B cell (primary cell): ENCODE measurements at regions of chr10 and their contacts with region 1.

Region 1: DNA sequence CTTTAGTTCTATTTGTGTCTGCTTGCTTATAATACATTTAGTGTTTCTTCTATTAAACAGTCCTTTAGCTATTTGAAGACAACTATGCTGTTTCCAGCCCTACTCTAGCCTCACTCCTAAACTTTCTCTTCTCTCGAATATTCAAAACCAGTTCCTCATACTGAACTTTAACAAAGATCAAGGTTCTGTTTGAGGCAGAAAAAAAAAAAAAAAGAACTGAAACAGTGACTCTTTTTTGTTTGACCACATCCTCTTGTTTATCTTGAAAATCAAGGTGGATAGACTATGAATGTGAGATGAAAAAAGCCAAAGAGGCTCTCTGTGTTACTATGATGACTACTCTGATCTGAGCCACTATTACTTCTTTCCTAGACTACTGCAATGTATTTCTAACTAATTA is 154.3 kb downstream of the ZNF365 start:
- DNase-seq: peak; percentile 77
- ATAC-seq: peak; percentile 64
- H3K4me3 ChIP-seq: peak overlapping the region in 1 of 5 experiments; percentile 38
- H3K4me3 Mint-ChIP-seq: peak overlapping the region; percentile 66
- H3K27ac ChIP-seq: peak overlapping the region; percentile 84 to 90
- H3K27ac Mint-ChIP-seq: peak overlapping the region; percentile 96
- H3K4me1 ChIP-seq: peaks cover 47 to 51% of the 10 kb centered on the region in 2 donors
- H3K4me1 Mint-ChIP-seq: peaks cover 62% of the 10 kb centered on the region
- H3K27me3 ChIP-seq: no peaks in the 10 kb centered on the region
- H3K27me3 Mint-ChIP-seq: no peaks in the 10 kb centered on the region
- CTCF ChIP-seq: no peak

Region 2: DNA sequence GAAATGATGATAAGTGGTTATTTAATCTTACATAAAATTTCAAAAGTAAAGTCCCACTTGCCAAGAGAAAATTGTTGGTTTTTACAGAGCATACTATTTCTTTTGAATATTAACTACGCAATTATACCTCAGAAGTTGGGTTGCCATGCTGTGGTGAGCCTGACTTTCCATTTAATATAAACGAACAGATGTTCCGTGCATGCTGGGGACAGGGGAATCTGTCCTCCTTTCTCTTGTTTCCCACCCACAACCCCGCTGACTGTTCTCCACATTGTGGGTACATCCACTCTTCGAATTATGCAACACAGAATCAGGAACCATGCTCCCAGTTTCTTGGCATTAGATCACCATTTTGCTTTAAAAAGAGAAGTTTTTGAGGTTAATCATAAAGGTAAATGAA is 230.6 kb before region 1 on chr10:
- CTCF ChIA-PET with region 1: no interaction called
- POLR2A ChIA-PET with region 1: no interaction called
- intact Hi-C with region 1: no loop called
- DNase-seq: no peak
- ATAC-seq: no peak
- H3K4me3 ChIP-seq: no peak overlapping the region
- H3K4me3 Mint-ChIP-seq: no peak overlapping the region
- H3K27ac ChIP-seq: no peak overlapping the region
- H3K27ac Mint-ChIP-seq: no peak overlapping the region
- H3K4me1 ChIP-seq: no peaks in the 10 kb centered on the region
- H3K4me1 Mint-ChIP-seq: no peaks in the 10 kb centered on the region
- H3K27me3 ChIP-seq: peaks cover 0 to 3% (median 3%) of the 10 kb centered on the region in 4 experiments
- H3K27me3 Mint-ChIP-seq: peaks cover 31% of the 10 kb centered on the region
- CTCF ChIP-seq: no peak

Region 3: DNA sequence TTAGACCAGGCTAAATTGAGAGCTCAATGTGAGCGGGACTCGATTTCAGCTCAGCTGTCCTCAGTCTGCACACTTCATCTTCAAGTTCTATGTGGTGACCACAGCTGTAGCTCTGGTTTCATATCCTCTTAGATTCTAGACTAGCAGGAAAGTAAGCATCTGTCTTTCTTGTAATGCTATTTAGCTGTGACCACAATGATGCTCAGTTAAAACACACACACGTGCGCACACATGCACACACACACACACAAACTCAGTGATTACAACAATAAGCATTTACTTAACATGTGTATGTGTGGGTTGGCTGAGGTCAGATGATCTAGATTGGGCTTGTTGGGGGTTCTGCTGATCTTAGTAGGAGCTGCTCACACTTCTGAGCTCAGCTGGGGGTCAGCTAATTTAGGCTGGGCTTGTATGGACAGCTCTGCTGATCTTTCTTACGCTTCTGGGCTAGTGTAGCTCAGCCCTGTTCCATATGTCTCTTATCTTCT is 71.8 kb before region 1 on chr10:
- CTCF ChIA-PET with region 1: interaction called, 7 read pairs
- POLR2A ChIA-PET with region 1: interaction called, 8 read pairs
- intact Hi-C with region 1: loop called (anchors 2 kb)
- DNase-seq: peak; percentile 85
- ATAC-seq: peak; percentile 93
- H3K4me3 ChIP-seq: no peak overlapping the region
- H3K4me3 Mint-ChIP-seq: peak overlapping the region; percentile 63
- H3K27ac ChIP-seq: peak overlapping the region in 1 of 2 donors; percentile 1
- H3K27ac Mint-ChIP-seq: peak overlapping the region; percentile 86
- H3K4me1 ChIP-seq: peaks cover 30 to 33% of the 10 kb centered on the region in 2 donors
- H3K4me1 Mint-ChIP-seq: peaks cover 34% of the 10 kb centered on the region
- H3K27me3 ChIP-seq: no peaks in the 10 kb centered on the region
- H3K27me3 Mint-ChIP-seq: no peaks in the 10 kb centered on the region
- CTCF ChIP-seq: no peak

Region 4: GRCh38 chr10:62512732-62513475 is 15.5 kb before region 1 on chr10:
- CTCF ChIA-PET with region 1: no interaction called
- POLR2A ChIA-PET with region 1: no interaction called
- intact Hi-C with region 1: no loop called
- DNase-seq: no peak
- ATAC-seq: no peak
- H3K4me3 ChIP-seq: no peak overlapping the region
- H3K4me3 Mint-ChIP-seq: no peak overlapping the region
- H3K27ac ChIP-seq: no peak overlapping the region
- H3K27ac Mint-ChIP-seq: no peak overlapping the region
- H3K4me1 ChIP-seq: no peaks in the 10 kb centered on the region
- H3K4me1 Mint-ChIP-seq: peaks cover 9% of the 10 kb centered on the region
- H3K27me3 ChIP-seq: no peaks in the 10 kb centered on the region
- H3K27me3 Mint-ChIP-seq: peaks cover 3% of the 10 kb centered on the region
- CTCF ChIP-seq: no peak

Region 5: DNA sequence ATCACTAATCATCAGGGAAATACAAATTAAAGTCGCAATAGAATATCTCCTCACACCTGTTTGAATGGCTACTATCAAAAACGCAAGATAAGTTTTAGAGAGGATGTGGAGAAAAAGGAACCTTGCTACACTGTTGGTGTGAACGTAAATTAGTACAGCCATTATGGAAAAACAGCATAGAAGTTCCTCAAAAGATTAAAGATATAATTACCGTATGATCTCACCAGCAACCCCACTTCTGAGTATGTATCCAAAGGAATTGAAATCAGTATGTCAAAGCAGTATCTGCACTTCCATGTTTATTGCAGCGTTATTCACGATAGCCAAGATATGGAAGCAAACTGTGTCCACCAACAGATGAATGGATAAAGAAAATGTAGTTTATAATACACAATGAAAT is 10.2 kb after region 1 on chr10:
- CTCF ChIA-PET with region 1: interaction called, 7 read pairs
- POLR2A ChIA-PET with region 1: interaction called, 20 read pairs
- intact Hi-C with region 1: loop called (anchors 1 kb)
- DNase-seq: peak; percentile 30
- ATAC-seq: no peak
- H3K4me3 ChIP-seq: no peak overlapping the region
- H3K4me3 Mint-ChIP-seq: peak overlapping the region; percentile 2
- H3K27ac ChIP-seq: peak overlapping the region; percentile 58 to 66
- H3K27ac Mint-ChIP-seq: peak overlapping the region; percentile 78
- H3K4me1 ChIP-seq: peaks cover 46 to 47% of the 10 kb centered on the region in 2 donors
- H3K4me1 Mint-ChIP-seq: peaks cover 57% of the 10 kb centered on the region
- H3K27me3 ChIP-seq: no peaks in the 10 kb centered on the region
- H3K27me3 Mint-ChIP-seq: no peaks in the 10 kb centered on the region
- CTCF ChIP-seq: no peak

Region 6: DNA sequence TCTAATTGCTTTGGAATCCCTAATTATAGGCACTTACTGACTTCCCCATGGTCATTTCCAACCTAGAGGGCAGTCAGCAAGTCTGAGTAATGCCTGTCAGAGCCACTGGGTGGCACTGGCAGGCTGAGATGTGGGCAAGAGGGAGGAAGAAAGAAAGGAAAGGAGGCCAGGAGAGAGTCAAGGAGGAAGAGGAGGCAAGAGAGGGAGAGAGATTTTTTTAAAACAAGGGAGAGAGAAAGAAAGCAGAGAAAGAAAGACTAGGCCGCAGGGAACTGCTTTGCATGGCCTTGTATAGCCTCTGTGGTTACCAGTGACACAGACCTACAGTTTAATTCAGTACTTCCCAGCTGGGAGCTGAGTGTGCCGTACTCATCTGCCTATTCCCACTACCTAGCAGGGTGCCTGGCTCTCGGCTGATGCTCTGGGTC is 65.7 kb after region 1 on chr10:
- CTCF ChIA-PET with region 1: interaction called, 35 read pairs
- POLR2A ChIA-PET with region 1: interaction called, 3 read pairs
- intact Hi-C with region 1: loop called (anchors 5 kb)
- DNase-seq: peak; percentile 74
- ATAC-seq: peak; percentile 89
- H3K4me3 ChIP-seq: no peak overlapping the region
- H3K4me3 Mint-ChIP-seq: no peak overlapping the region
- H3K27ac ChIP-seq: no peak overlapping the region
- H3K27ac Mint-ChIP-seq: no peak overlapping the region
- H3K4me1 ChIP-seq: peaks cover 7 to 10% of the 10 kb centered on the region in 2 donors
- H3K4me1 Mint-ChIP-seq: peaks cover 7% of the 10 kb centered on the region
- H3K27me3 ChIP-seq: no peaks in the 10 kb centered on the region
- H3K27me3 Mint-ChIP-seq: no peaks in the 10 kb centered on the region
- CTCF ChIP-seq: peak; percentile 88

Region 7: GRCh38 chr10:63133056-63133820 is 604.8 kb after region 1 on chr10 and contains the start of gene NRBF2:
- CTCF ChIA-PET with region 1: no interaction called
- POLR2A ChIA-PET with region 1: no interaction called
- intact Hi-C with region 1: loop called (anchors 2 kb)
- DNase-seq: peak; percentile 99
- ATAC-seq: peak; percentile 86
- H3K4me3 ChIP-seq: peak within 1 kb of the TSS; percentile 89 to 100 (median 95)
- H3K4me3 Mint-ChIP-seq: peak within 1 kb of the TSS; percentile 93
- H3K27ac ChIP-seq: peak within 1 kb of the TSS; percentile 99
- H3K27ac Mint-ChIP-seq: peak within 1 kb of the TSS; percentile 97
- H3K4me1 ChIP-seq: peaks cover 26 to 36% of the 10 kb centered on the region in 2 donors
- H3K4me1 Mint-ChIP-seq: peaks cover 43% of the 10 kb centered on the region
- H3K27me3 ChIP-seq: peaks cover 0 to 2% (median 0%) of the 10 kb centered on the region in 4 experiments
- H3K27me3 Mint-ChIP-seq: peaks cover 3% of the 10 kb centered on the region
- CTCF ChIP-seq: peak; percentile 39
- total RNA-seq, gene NRBF2: 20.5 and 24.6 TPM in 2 replicates